Activated CD4-positive, alpha-beta T cell treated with anti-CD3 and anti-CD28 coated beads for 36 hours (primary cell): ENCODE measurements at regions of chr2 and their contacts with region 1.

Region 1: GRCh38 chr2:241617431-241618154 is 19.4 kb downstream of the THAP4 start:
- DNase-seq: peak; percentile 58
- ATAC-seq: peak; percentile 38
- H3K4me3 Mint-ChIP-seq: peak overlapping the region; percentile 66
- H3K27ac Mint-ChIP-seq: peak overlapping the region; percentile 98
- H3K4me1 Mint-ChIP-seq: peaks cover 51% of the 10 kb centered on the region
- H3K27me3 Mint-ChIP-seq: no peaks in the 10 kb centered on the region

Region 2: DNA sequence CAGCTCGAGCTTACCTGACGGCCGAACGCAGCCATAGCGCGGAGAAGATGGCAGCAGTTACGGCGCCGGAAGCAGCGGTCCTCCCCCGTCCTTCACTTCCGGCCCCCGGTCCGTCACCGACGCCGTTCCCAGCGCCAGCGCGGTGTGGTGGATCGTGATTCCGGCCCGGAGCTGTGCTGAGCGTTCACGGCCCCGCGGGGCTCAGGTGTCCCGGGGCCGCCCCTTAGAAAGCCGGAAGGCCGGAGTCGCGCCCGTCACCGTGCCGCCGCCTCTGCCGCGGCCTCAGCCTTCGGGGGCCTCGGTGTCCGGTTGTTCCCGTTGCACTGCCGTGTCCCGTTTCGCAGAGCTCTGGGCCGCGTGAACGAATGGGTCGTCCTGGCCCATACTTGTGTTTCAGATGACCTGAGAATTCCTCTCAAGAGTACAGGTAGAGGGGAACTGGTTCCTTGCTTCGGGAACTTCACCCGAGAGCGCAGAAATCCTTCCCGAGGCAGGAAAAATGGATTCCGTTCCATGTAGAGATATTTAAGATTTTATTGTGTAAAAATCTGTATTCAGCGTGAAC is 515.3 kb before region 1 on chr2 and contains the start of gene MTERF4:
- CTCF ChIA-PET with region 1: no interaction called
- POLR2A ChIA-PET with region 1: no interaction called
- intact Hi-C with region 1: loop called in 1 of 2 experiments (anchors 5 kb)
- DNase-seq: peak; percentile 94
- ATAC-seq: peak; percentile 97
- H3K4me3 Mint-ChIP-seq: peak within 1 kb of the TSS; percentile 98
- H3K27ac Mint-ChIP-seq: peak within 1 kb of the TSS; percentile 99
- H3K4me1 Mint-ChIP-seq: peaks cover 48% of the 10 kb centered on the region
- H3K27me3 Mint-ChIP-seq: no peaks in the 10 kb centered on the region
- total RNA-seq, gene MTERF4: 34.4 to 34.5 TPM

Region 3: DNA sequence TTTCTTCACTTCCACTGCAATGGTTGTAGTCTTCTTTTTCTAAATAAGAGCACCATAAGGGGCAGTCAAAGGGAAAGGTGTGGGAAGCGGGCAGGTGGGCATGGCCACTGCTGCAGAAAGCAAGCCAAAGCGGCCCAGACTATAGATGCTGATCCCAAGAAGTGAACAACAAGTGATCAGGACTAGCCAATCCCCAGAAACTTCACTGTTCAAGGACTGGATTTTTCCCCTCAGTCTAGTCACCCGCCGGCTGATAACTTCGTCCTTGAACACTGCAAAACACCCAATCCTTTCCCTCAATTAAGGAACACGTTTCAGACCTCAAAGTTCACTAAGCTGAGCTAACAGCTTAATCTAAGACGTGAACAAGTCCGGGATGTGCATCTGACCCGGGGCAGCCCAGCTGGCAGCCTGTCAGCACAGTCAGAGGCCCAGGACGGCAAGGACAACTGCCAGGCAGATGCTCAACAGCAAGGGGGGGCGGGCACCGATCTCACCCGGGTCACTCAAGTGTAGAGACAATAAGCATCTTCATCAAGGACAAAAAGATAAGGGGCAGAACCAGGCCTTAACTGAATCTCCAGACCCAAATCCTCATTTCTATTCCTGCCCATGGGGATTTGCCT is 361.9 kb before region 1 on chr2:
- CTCF ChIA-PET with region 1: no interaction called
- POLR2A ChIA-PET with region 1: no interaction called
- intact Hi-C with region 1: no loop called
- DNase-seq: no peak
- ATAC-seq: no peak
- H3K4me3 Mint-ChIP-seq: no peak overlapping the region
- H3K27ac Mint-ChIP-seq: no peak overlapping the region
- H3K4me1 Mint-ChIP-seq: peaks cover 4% of the 10 kb centered on the region
- H3K27me3 Mint-ChIP-seq: no peaks in the 10 kb centered on the region

Region 4: GRCh38 chr2:241443486-241444223 is 173.9 kb before region 1 on chr2:
- CTCF ChIA-PET with region 1: no interaction called
- POLR2A ChIA-PET with region 1: no interaction called
- intact Hi-C with region 1: loop called (anchors 2 to 10 kb)
- DNase-seq: peak; percentile 95
- ATAC-seq: peak; percentile 86
- H3K4me3 Mint-ChIP-seq: peak overlapping the region; percentile 48
- H3K27ac Mint-ChIP-seq: peak overlapping the region; percentile 45
- H3K4me1 Mint-ChIP-seq: peaks cover 27% of the 10 kb centered on the region
- H3K27me3 Mint-ChIP-seq: peaks cover 37% of the 10 kb centered on the region

Region 5: DNA sequence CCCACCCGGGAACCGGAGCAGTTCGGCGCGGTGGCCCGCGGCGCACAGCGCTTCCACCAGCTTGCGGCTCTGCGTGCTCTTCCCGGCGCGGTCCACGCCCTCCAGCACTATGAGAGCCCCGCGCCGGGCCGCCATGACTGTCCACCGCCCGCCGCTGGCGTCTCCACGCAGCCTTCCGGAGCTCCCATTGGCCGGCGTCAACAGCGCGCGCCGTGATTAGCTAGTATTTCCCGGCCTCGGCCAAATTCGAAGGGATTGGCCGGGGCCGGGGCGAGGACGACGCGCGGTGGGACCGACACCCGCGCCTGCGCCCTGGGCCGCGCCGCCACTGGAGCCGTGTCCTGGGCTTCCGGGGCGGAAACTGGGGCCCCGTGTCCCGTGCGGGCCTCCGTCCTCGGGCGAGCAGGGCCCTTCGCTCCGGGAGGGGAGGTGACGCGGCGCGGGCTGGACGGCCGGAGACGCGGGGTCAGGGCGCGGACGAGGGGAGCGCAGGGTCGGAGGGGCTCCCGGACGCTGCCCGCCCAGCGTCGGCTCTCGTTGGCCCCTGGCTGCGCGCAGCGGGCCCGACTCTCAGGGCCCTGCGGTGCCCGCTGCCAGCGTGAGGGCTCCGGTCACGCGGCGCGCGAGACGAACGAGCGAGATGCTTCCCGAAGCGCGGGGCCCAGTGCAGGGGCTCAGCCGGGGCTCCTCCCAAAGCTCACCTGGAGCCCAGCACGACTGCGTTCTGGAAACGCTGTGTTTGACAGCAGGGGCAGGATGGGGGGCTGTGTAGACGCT is 69.2 kb after region 1 on chr2 and contains the start of gene DTYMK:
- CTCF ChIA-PET with region 1: no interaction called
- POLR2A ChIA-PET with region 1: no interaction called
- intact Hi-C with region 1: loop called in 1 of 2 experiments (anchors 1 kb)
- DNase-seq: peak; percentile 98
- ATAC-seq: peak; percentile 96
- H3K4me3 Mint-ChIP-seq: peak within 1 kb of the TSS; percentile 98
- H3K27ac Mint-ChIP-seq: peak within 1 kb of the TSS; percentile 96
- H3K4me1 Mint-ChIP-seq: peaks cover 32% of the 10 kb centered on the region
- H3K27me3 Mint-ChIP-seq: no peaks in the 10 kb centered on the region
- total RNA-seq, gene DTYMK: 79.8 to 93.1 TPM

Region 6: GRCh38 chr2:241750076-241750840 is 132.7 kb after region 1 on chr2:
- CTCF ChIA-PET with region 1: no interaction called
- POLR2A ChIA-PET with region 1: no interaction called
- intact Hi-C with region 1: no loop called
- DNase-seq: no peak
- ATAC-seq: no peak
- H3K4me3 Mint-ChIP-seq: no peak overlapping the region
- H3K27ac Mint-ChIP-seq: no peak overlapping the region
- H3K4me1 Mint-ChIP-seq: no peaks in the 10 kb centered on the region
- H3K27me3 Mint-ChIP-seq: no peaks in the 10 kb centered on the region

Region 7: GRCh38 chr2:241965931-241966412 is 348.4 kb after region 1 on chr2:
- CTCF ChIA-PET with region 1: no interaction called
- POLR2A ChIA-PET with region 1: no interaction called
- intact Hi-C with region 1: loop called in 1 of 2 experiments (anchors 5 kb)
- DNase-seq: peak; percentile 90
- ATAC-seq: peak; percentile 93
- H3K4me3 Mint-ChIP-seq: peak overlapping the region; percentile 65
- H3K27ac Mint-ChIP-seq: peak overlapping the region; percentile 91
- H3K4me1 Mint-ChIP-seq: peaks cover 31% of the 10 kb centered on the region
- H3K27me3 Mint-ChIP-seq: no peaks in the 10 kb centered on the region